Adrenal gland (tissue), 19 donors: ENCODE measurements at regions of chr11 and their contacts with region 1.

Region 1: DNA sequence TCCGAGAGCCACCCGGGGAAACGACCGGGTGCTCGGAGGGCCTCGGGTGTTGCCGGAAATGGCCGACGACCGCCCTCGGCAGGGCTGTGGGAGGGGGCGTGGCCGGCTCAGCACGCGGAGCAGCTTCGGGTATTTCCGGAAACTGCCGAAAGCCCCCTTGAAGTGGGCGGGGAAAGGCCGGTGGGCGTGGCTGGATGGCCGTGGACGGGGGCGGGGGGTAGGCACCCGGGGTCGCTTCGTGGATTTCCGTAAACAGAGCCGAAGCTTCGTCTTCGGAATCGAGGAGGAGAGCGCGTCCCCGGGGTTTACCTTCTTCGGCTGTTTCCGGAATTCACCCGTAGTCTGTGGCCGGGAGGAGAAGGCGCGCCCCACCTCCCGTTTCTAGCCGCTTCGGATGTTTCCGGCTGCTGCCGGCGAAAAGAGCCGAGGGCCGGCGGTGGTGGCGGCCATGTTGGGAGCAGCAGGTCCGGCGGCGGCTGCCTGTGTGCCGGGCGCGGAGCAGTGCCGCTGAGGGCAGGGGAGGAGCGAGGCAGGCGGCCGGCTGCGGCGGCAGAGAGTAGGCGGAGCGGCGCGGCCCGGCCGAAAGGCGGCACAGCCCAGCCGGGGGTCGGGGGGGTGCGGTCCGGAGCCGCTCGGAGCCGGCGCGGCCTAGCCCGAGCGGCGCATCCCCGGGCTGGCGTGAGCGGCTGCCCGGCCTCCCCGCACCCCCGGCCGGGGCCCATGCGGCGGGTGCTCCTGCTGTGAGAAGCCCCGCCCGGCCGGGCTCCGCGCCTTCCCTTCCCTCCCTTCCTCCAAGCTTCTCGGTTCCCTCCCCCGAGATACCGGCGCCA is at the start of gene MARK2:
- DNase-seq: peak; percentile 98 to 100 (median 99)
- H3K4me3 ChIP-seq: peak within 1 kb of the TSS; percentile 45 to 98 (median 63)
- H3K27ac ChIP-seq: peak within 1 kb of the TSS; percentile 59 to 93 (median 75)
- H3K4me1 ChIP-seq: peaks cover 40 to 50% of the 10 kb centered on the region in 2 donors
- H3K27me3 ChIP-seq: no peaks in the 10 kb centered on the region
- CTCF ChIP-seq: peak in 1 of 6 experiments; percentile 12
- POLR2A ChIP-seq: peak; percentile 49 to 58
- total RNA-seq, gene MARK2: 9.7 to 39.7 (median 35.8) TPM

Region 2: GRCh38 chr11:63879598-63880402 is 40.9 kb after region 1 on chr11:
- intact Hi-C with region 1: loop called in 1 of 2 experiments (anchors 5 kb)
- DNase-seq: peak in 3 of 7 donors; percentile 34 to 55 (median 48)
- H3K4me3 ChIP-seq: no peak overlapping the region
- H3K27ac ChIP-seq: peak overlapping the region in 4 of 5 donors; percentile 5 to 72 (median 54)
- H3K4me1 ChIP-seq: peaks cover 25 to 37% of the 10 kb centered on the region in 2 donors
- H3K27me3 ChIP-seq: no peaks in the 10 kb centered on the region
- CTCF ChIP-seq: no peak
- POLR2A ChIP-seq: no peak

Region 3: GRCh38 chr11:63945477-63946163 is 106.7 kb after region 1 on chr11:
- intact Hi-C with region 1: loop called (anchors 2 kb)
- DNase-seq: peak; percentile 77 to 92 (median 88)
- H3K4me3 ChIP-seq: peak overlapping the region in 1 of 4 donors; percentile 8
- H3K27ac ChIP-seq: peak overlapping the region; percentile 28 to 79 (median 74)
- H3K4me1 ChIP-seq: peaks cover 15 to 23% of the 10 kb centered on the region in 2 donors
- H3K27me3 ChIP-seq: no peaks in the 10 kb centered on the region
- CTCF ChIP-seq: peak; percentile 70 to 94 (median 86)
- POLR2A ChIP-seq: no peak

Region 4: DNA sequence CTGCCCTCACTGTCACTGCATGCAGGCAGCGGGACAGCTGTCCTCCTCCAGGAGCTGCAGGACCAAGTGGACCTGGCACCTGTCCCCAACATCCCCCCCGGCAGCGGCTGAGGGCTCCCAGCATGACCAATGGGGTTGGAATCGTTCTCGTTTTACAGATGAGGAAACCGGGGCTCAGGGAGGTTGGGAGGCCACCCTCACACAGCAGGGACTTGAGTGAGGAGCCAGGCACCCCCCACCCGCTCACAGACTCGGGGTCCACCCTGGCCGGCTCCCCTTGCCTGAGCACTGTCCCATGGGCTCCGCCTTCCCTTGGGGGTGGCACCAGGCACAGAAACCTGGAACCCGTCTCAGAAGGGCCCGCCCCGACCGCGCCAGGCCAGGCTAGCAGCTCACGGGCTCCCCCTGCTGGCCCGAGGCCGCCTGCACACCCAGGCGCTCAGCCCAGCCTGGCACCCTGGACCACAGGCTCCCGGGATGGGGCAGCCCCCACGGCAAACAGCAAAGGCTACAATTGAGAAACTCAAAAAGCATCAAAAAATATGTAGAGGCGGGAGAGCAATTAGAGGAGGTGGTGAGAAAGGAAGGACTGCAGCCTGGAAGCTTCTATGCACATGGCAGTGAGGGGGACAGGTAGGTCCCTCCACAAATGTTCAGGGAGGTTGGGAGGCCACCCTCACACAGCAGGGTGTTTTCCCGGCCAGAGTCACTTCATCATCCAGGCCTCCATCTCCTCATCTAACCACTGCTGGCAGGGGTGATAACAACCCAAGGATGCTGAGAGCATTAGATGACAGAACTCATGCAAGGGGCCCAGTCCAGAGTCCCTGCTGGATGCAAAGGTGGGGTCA is 314.2 kb after region 1 on chr11:
- intact Hi-C with region 1: loop called in 1 of 2 experiments (anchors 10 kb)
- DNase-seq: peak; percentile 46 to 78 (median 67)
- H3K4me3 ChIP-seq: no peak overlapping the region
- H3K27ac ChIP-seq: no peak overlapping the region
- H3K4me1 ChIP-seq: peaks cover 6 to 21% of the 10 kb centered on the region in 2 donors
- H3K27me3 ChIP-seq: no peaks in the 10 kb centered on the region
- CTCF ChIP-seq: peak; percentile 79 to 100 (median 96)
- POLR2A ChIP-seq: no peak